Sciatic nerve (tissue), 2 donors: ENCODE measurements at regions of chr13 and their contacts with region 1.

Region 1: DNA sequence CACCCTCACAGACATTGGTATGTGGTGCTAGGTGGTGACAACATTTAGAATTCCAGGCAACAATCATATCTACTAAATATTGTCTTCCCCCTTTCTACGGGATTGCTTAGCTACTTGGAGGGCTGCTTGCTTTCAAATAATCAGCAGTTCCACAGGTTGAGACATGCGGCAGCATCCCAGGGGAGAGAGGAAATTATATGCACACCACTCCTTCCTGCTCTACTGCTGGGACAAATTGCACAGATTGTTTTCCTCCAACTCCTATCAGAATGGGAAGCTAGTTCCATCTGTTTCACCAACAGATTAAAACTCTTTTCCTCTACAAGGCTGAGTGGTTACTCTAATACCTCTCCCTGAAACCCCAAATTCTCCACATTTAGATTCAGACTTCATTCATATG is 275.4 kb downstream of the DNAJC15 start:
- DNase-seq: no peak
- ATAC-seq: no peak

Region 2: GRCh38 chr13:43116242-43116641 is 182.6 kb before region 1 on chr13:
- intact Hi-C with region 1: loop called (anchors 5 kb)
- DNase-seq: no peak
- ATAC-seq: no peak